PC-9 (cell line): ENCODE measurements at regions of chr9 and their contacts with region 1.

Region 1: DNA sequence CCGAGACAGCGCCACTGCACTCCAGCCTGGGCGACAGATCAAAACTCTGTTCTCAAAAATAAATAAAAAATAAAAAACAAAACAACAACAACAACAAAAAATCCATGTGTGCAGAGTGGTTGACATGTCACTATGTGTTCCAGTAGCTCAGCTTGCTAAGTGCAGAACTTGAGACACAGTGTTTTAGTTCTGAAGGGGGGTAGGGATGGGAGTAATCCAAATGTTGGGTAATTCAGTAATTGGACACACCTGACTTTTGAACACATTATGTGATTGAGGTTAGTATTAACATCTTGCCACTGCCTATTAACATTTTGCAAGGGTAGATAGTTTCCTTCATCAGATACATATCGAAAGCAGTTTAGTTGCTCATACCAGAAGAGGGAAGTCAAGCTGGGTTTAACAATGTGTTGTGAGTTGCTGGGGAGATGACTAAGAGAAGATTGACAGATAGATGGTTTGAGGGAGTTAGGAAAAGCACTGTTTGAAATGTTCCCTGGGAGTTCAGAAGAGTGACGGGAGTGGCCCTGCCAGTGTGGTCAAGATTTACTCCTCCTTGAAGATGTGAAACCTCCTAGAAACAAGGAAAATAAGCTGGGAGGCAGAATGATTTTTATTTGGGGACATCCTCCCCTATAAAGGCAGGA is 928 bp downstream of the HACD4 start:
- DNase-seq: peak; percentile 29 to 71
- H3K4me3 ChIP-seq: no peak overlapping the region; the same call in 1 of the 2 replicates
- H3K27ac ChIP-seq: no peak overlapping the region
- H3K4me1 ChIP-seq: 0 out of 2 replicates have a peak, but pooled peaks cover 3% of the 10 kb centered on the region
- H3K27me3 ChIP-seq: no peaks in the 10 kb centered on the region
- CTCF ChIP-seq: no peak

Region 2: GRCh38 chr9:21095547-21095946 is 65.0 kb after region 1 on chr9:
- CTCF ChIA-PET with region 1: no interaction called
- POLR2A ChIA-PET with region 1: interaction called, 3 read pairs
- intact Hi-C with region 1: loop called (anchors 1 kb)
- DNase-seq: peak; percentile 41 to 73
- H3K4me3 ChIP-seq: no peak overlapping the region; the same call in 1 of the 2 replicates
- H3K27ac ChIP-seq: peak overlapping the region; percentile 89
- H3K4me1 ChIP-seq: peaks cover 30% of the 10 kb centered on the region
- H3K27me3 ChIP-seq: no peaks in the 10 kb centered on the region
- CTCF ChIP-seq: no peak

Region 3: GRCh38 chr9:21244836-21245235 is 214.3 kb after region 1 on chr9:
- CTCF ChIA-PET with region 1: no interaction called
- POLR2A ChIA-PET with region 1: no interaction called
- intact Hi-C with region 1: no loop called
- DNase-seq: no peak
- H3K4me3 ChIP-seq: no peak overlapping the region
- H3K27ac ChIP-seq: no peak overlapping the region
- H3K4me1 ChIP-seq: no peaks in the 10 kb centered on the region
- H3K27me3 ChIP-seq: no peaks in the 10 kb centered on the region
- CTCF ChIP-seq: no peak

Region 4: GRCh38 chr9:22416692-22417060 is 1386.2 kb after region 1 on chr9:
- CTCF ChIA-PET with region 1: no interaction called
- POLR2A ChIA-PET with region 1: no interaction called
- intact Hi-C with region 1: no loop called
- DNase-seq: peak in 1 of 2 experiments; percentile 3
- H3K4me3 ChIP-seq: no peak overlapping the region
- H3K27ac ChIP-seq: no peak overlapping the region
- H3K4me1 ChIP-seq: peaks cover 12% of the 10 kb centered on the region; the same call in 1 of the 2 replicates
- H3K27me3 ChIP-seq: no peaks in the 10 kb centered on the region
- CTCF ChIP-seq: no peak